Natural killer cell (primary cell): ENCODE measurements at regions of chr11 and their contacts with region 1.

Region 1: GRCh38 chr11:108253176-108253575 is 30.3 kb downstream of the ATM start:
- DNase-seq: peak in 1 of 2 donors; percentile 33
- ATAC-seq: no peak
- H3K4me3 ChIP-seq: no peak overlapping the region
- H3K4me3 Mint-ChIP-seq: no peak overlapping the region
- H3K27ac ChIP-seq: no peak overlapping the region
- H3K27ac Mint-ChIP-seq: peak overlapping the region; percentile 87
- H3K4me1 ChIP-seq: no peaks in the 10 kb centered on the region
- H3K4me1 Mint-ChIP-seq: peaks cover 18% of the 10 kb centered on the region in 2 donors
- H3K27me3 ChIP-seq: no peaks in the 10 kb centered on the region
- H3K27me3 Mint-ChIP-seq: no peaks in the 10 kb centered on the region
- CTCF ChIP-seq: no peak

Region 2: GRCh38 chr11:108008656-108009496 is 244.3 kb before region 1 on chr11 and contains the start of gene CUL5:
- intact Hi-C with region 1: no loop called
- DNase-seq: peak; percentile 88 to 95
- ATAC-seq: peak; percentile 81 to 92 (median 88)
- H3K4me3 ChIP-seq: peak within 1 kb of the TSS; percentile 90
- H3K4me3 Mint-ChIP-seq: peak within 1 kb of the TSS; percentile 99
- H3K27ac ChIP-seq: peak within 1 kb of the TSS; percentile 93
- H3K27ac Mint-ChIP-seq: peak within 1 kb of the TSS; percentile 98
- H3K4me1 ChIP-seq: peaks cover 3% of the 10 kb centered on the region
- H3K4me1 Mint-ChIP-seq: peaks cover 21 to 25% of the 10 kb centered on the region in 2 donors
- H3K27me3 ChIP-seq: no peaks in the 10 kb centered on the region
- H3K27me3 Mint-ChIP-seq: no peaks in the 10 kb centered on the region
- CTCF ChIP-seq: peak; percentile 72
- total RNA-seq, gene CUL5: 59.1 to 68.3 (median 60.2) TPM

Region 3: DNA sequence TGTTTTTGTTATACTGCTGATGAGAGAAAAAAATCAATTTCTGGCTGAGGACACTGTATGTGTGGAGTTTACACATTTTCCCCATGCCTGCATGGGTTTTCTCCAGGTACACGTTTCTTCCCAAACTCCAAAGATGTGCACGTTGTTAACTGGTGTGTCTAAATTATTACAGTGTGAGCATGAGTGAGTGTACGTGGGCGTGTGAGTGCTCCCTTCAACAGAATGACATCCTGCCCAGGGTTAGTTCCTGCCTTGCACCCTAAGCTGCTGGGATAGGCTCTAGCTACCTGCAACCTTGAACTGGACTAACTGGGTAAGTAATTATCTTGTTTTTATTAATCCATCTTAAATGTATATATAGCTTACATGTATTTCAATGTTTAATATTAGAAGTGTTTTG is 36.2 kb before region 1 on chr11:
- intact Hi-C with region 1: loop called (anchors 5 kb)
- DNase-seq: peak in 1 of 2 donors; percentile 47
- ATAC-seq: no peak
- H3K4me3 ChIP-seq: no peak overlapping the region
- H3K4me3 Mint-ChIP-seq: no peak overlapping the region
- H3K27ac ChIP-seq: no peak overlapping the region
- H3K27ac Mint-ChIP-seq: peak overlapping the region; percentile 34 to 81
- H3K4me1 ChIP-seq: no peaks in the 10 kb centered on the region
- H3K4me1 Mint-ChIP-seq: peaks cover 70 to 80% of the 10 kb centered on the region in 2 donors
- H3K27me3 ChIP-seq: no peaks in the 10 kb centered on the region
- H3K27me3 Mint-ChIP-seq: no peaks in the 10 kb centered on the region
- CTCF ChIP-seq: no peak

Region 4: DNA sequence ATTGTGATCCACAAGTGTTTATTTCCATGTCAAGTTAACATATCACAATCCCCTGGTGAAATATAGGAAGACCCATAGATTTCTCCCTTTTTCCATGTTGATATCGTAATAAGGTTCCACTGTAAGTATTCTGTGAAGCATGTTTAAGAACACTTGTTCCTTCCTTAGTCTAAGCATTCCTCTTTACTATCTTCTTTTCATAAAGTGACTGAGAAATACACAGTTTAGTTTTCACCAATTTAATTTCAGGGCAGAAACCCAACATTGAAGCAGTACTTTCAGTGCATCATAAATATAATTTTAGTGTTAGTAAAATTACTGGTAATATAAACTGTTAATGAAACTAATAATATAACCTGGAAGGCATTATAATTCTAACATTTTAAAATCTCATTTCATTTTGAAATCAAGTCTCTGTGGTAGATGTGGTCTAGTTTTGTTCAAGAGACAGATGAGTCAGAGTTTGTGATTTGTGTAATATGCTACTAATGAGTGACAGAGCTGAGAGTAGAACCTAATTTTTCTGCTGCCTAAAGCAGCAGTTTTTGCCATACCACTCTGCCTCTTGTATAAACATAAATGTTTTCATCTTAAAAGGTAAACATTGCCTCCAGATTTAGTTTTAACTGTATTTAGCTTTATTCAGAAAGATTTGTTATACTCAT is 49.1 kb after region 1 on chr11:
- intact Hi-C with region 1: loop called (anchors 10 kb)
- DNase-seq: no peak
- ATAC-seq: no peak
- H3K4me3 ChIP-seq: no peak overlapping the region
- H3K4me3 Mint-ChIP-seq: no peak overlapping the region
- H3K27ac ChIP-seq: no peak overlapping the region
- H3K27ac Mint-ChIP-seq: peak overlapping the region; percentile 39 to 48
- H3K4me1 ChIP-seq: no peaks in the 10 kb centered on the region
- H3K4me1 Mint-ChIP-seq: peaks cover 4 to 10% of the 10 kb centered on the region in 2 donors
- H3K27me3 ChIP-seq: no peaks in the 10 kb centered on the region
- H3K27me3 Mint-ChIP-seq: no peaks in the 10 kb centered on the region
- CTCF ChIP-seq: no peak